Mammary epithelial cell (primary cell): ENCODE measurements at regions of chr1 and their contacts with region 1.

Region 1: GRCh38 chr1:42551180-42551579 is 88.1 kb downstream of the CCDC30 start:
- DNase-seq: no peak
- H3K4me3 ChIP-seq: no peak overlapping the region
- H3K27ac ChIP-seq: no peak overlapping the region
- H3K4me1 ChIP-seq: no peaks in the 10 kb centered on the region
- H3K27me3 ChIP-seq: no peaks in the 10 kb centered on the region
- CTCF ChIP-seq: no peak

Region 2: GRCh38 chr1:42385283-42385682 is 165.9 kb before region 1 on chr1:
- CTCF ChIA-PET with region 1: no interaction called
- dilution Hi-C with region 1: no loop called
- in situ Hi-C with region 1: no loop called
- intact Hi-C with region 1: no loop called
- DNase-seq: no peak
- H3K4me3 ChIP-seq: no peak overlapping the region
- H3K27ac ChIP-seq: no peak overlapping the region
- H3K4me1 ChIP-seq: peaks cover 4% of the 10 kb centered on the region
- H3K27me3 ChIP-seq: no peaks in the 10 kb centered on the region
- CTCF ChIP-seq: no peak

Region 3: GRCh38 chr1:42593486-42594100 is 42.4 kb after region 1 on chr1:
- CTCF ChIA-PET with region 1: no interaction called
- dilution Hi-C with region 1: no loop called
- in situ Hi-C with region 1: no loop called
- intact Hi-C with region 1: no loop called
- DNase-seq: no peak
- H3K4me3 ChIP-seq: no peak overlapping the region
- H3K27ac ChIP-seq: no peak overlapping the region
- H3K4me1 ChIP-seq: no peaks in the 10 kb centered on the region
- H3K27me3 ChIP-seq: peaks cover 3% of the 10 kb centered on the region
- CTCF ChIP-seq: no peak

Region 4: DNA sequence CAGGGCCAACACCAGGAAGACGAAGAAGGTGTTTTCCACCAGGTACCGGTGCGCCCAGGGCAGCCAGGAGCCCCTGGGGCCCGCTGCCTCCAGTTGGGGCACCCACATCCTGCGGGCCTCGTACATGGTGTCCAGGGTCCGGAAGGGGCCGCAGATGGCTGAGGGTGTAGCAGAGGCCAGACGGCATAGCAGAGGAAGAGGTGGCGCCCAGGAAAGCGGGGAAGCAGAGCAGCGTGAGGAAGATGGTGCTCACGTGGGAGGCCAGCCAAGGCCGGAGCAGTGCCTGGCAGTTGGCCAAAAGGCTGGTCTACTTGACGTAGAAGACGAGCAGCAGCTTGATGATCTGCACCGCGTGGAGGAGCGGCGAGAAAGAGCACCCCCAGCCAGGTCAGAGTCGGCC is 335.6 kb after region 1 on chr1:
- CTCF ChIA-PET with region 1: no interaction called
- dilution Hi-C with region 1: no loop called
- in situ Hi-C with region 1: loop called in 1 of 2 experiments (anchors 25 kb)
- intact Hi-C with region 1: no loop called
- DNase-seq: no peak
- H3K4me3 ChIP-seq: no peak overlapping the region
- H3K27ac ChIP-seq: no peak overlapping the region
- H3K4me1 ChIP-seq: no peaks in the 10 kb centered on the region
- H3K27me3 ChIP-seq: peaks cover 9% of the 10 kb centered on the region
- CTCF ChIP-seq: no peak